ENCODE measurements at regions of chr11 and their contacts with region 1.

Region 1: GRCh38 chr11:65083834-65084597 is at the starts of genes CDCA5 and ZFPL1:
- DNase-seq: peak; percentile 100
- ATAC-seq: peak; percentile 83
- H3K4me3 Mint-ChIP-seq: peak within 1 kb of the TSS; percentile 98
- H3K27ac Mint-ChIP-seq: peak within 1 kb of the TSS; percentile 99
- H3K4me1 Mint-ChIP-seq: peaks cover 41% of the 10 kb centered on the region
- H3K27me3 Mint-ChIP-seq: no peaks in the 10 kb centered on the region
- total RNA-seq, gene CDCA5: 85.5 to 95.7 TPM
- total RNA-seq, gene ZFPL1: 37.3 to 41.2 TPM

Region 2: DNA sequence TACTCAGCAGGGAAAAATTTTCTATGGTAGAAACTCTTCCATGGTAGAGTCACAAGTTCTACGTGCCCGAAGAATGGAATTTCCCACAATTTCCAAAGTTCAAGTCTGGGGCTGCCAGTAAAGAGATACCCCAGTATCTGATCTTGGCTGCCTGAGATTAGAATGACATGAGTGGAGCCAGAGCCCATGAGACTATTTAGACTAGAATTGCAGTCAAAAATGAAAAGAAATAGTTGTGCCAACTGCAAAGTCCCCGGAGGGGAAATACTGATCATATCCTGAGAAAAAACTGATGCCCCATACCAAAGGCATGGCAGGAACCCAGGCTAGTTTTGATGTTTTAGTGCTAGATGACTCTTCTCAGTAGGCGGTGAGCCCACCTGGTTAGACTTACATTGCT is 123.3 kb before region 1 on chr11:
- POLR2A ChIA-PET with region 1: no interaction called
- DNase-seq: no peak
- ATAC-seq: no peak
- H3K4me3 Mint-ChIP-seq: no peak overlapping the region
- H3K27ac Mint-ChIP-seq: no peak overlapping the region
- H3K4me1 Mint-ChIP-seq: peaks cover 8% of the 10 kb centered on the region
- H3K27me3 Mint-ChIP-seq: peaks cover 19% of the 10 kb centered on the region

Region 3: GRCh38 chr11:64976651-64977050 is 107.4 kb before region 1 on chr11:
- POLR2A ChIA-PET with region 1: no interaction called
- DNase-seq: peak; percentile 17
- ATAC-seq: no peak
- H3K4me3 Mint-ChIP-seq: no peak overlapping the region
- H3K27ac Mint-ChIP-seq: no peak overlapping the region
- H3K4me1 Mint-ChIP-seq: peaks cover 7% of the 10 kb centered on the region
- H3K27me3 Mint-ChIP-seq: peaks cover 2% of the 10 kb centered on the region

Region 4: GRCh38 chr11:65040847-65041621 is 43.0 kb before region 1 on chr11 and contains the start of gene SAC3D1:
- POLR2A ChIA-PET with region 1: interaction called, 12 read pairs
- DNase-seq: peak; percentile 93
- ATAC-seq: peak; percentile 95
- H3K4me3 Mint-ChIP-seq: peak within 1 kb of the TSS; percentile 91
- H3K27ac Mint-ChIP-seq: peak within 1 kb of the TSS; percentile 96
- H3K4me1 Mint-ChIP-seq: peaks cover 15% of the 10 kb centered on the region
- H3K27me3 Mint-ChIP-seq: no peaks in the 10 kb centered on the region
- total RNA-seq, gene SAC3D1: 24.2 to 25.8 TPM

Region 5: DNA sequence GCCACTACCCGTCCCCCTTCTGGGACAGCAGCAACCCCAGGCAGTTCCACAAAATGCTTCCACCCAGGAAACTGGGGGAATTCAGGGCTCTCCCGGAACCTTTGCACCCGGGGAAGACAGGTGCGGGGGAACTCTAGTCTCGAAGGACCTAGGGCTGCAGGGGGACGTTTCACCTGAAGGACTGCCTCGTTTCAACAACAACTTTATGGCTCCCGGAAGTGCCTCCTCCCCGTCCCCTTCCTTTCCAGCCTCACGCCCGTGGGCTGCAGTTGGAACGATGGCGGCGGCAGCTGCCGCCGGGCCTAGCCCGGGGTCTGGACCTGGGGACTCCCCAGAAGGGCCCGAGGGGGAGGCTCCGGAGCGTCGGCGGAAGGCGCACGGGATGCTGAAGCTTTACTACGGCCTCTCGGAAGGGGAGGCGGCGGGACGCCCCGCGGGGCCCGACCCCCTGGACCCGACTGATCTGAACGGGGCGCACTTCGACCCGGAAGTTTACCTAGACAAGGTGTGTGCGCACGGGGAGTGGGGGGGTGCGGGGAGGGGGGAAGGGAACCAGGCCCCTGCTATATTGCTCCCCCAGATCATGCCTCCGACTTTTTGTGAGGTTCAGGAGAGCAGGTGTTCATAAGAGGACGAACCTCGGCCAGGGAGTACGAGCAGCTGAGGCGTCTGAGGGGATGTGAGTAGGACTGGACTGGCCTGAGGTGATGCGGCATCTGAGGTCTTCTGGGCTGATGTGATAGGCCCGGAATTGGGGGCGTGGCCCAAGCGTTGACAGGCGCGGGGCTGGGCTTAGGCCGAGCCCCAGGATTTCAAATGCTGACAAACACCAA is 12.2 kb after region 1 on chr11 and contains the start of gene VPS51:
- POLR2A ChIA-PET with region 1: interaction called, 15 read pairs
- DNase-seq: peak; percentile 87
- ATAC-seq: peak; percentile 97
- H3K4me3 Mint-ChIP-seq: peak within 1 kb of the TSS; percentile 91
- H3K27ac Mint-ChIP-seq: peak within 1 kb of the TSS; percentile 97
- H3K4me1 Mint-ChIP-seq: peaks cover 10% of the 10 kb centered on the region
- H3K27me3 Mint-ChIP-seq: no peaks in the 10 kb centered on the region
- total RNA-seq, gene VPS51: 130 to 138 TPM

Measured in activated naive CD8-positive, alpha-beta T cell treated with anti-CD3 and anti-CD28 coated beads, Interleukin-2, amount 10 ng/mL, durations not matched to agents 7 days and 5 days (primary cell).